A673 (cell line): ENCODE measurements at regions of chr4 and their contacts with region 1.

Region 1: DNA sequence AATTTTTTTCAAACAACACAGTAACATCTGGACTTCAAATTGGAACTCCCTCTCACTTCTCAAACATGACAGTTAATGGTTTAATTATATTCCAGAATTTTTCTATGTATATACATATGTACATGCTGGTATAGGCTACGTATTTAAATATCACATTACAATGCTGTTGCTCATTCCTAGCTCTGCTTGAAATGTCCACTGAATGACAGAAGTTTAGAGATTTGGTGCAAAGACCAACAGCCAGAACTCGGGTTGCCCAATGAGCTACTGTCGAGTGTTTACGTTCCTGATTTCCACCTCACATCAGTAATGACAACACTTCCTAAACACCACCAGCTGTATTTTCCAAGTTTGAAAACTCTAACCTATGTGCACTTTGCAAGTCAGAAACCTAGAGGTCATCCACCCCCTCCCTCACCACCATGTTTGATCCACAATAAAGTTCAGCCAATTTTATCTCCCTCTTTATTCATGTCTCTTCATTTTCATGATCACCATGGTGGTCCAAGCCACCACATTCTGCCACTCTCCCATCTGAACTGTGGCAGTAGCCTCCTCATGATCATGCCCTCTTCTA is 49.3 kb upstream of the RPL34 start:
- DNase-seq: no peak
- H3K4me3 ChIP-seq: no peak overlapping the region
- H3K27ac ChIP-seq: no peak overlapping the region
- H3K4me1 ChIP-seq: no peaks in the 10 kb centered on the region
- H3K27me3 ChIP-seq: no peaks in the 10 kb centered on the region
- CTCF ChIP-seq: no peak

Region 2: DNA sequence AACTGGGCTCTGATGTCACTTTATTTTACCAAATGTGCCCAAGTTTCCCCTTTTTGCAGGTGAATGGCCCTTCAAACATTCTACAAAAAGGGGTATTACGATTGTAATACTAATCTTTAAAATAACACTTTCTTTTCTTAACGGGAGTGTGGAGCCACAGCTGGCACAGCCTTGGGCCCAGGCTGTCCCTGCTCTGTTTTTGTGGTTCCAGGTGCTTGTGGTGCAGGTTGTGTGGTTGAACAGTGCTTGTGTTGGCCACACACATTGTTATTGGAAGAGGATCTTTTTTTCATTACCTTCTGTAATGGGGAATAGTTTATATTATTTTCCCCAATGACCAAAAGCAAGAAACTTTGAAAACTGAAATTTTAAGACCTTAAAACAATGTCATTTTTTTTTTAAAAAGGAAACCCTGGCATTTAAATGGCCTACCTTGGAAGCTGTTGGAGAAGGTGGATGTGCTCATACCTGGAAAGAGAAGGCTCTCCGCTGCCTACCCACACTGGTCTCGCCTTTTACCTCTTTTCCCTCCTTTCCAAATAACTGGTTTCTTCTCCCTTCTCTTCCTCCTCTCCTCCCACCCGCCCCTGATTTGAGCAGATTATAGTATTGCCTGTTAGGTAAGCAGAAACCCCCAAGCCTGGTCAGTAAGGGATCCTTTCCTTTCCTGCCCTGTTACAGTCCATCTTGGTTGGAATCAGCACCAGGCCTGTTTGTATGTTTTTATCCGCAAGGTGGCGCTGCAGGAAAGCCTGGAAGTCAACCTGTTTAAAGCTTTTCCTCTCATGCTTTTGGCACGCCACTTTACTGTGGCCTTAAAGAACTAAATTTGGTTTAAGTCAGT is 552.8 kb before region 1 on chr4:
- CTCF ChIA-PET with region 1: interaction called, 13 read pairs
- POLR2A ChIA-PET with region 1: interaction called, 3 read pairs
- intact Hi-C with region 1: loop called (anchors 2 kb)
- DNase-seq: peak; percentile 80
- H3K4me3 ChIP-seq: no peak overlapping the region
- H3K27ac ChIP-seq: no peak overlapping the region
- H3K4me1 ChIP-seq: no peaks in the 10 kb centered on the region
- H3K27me3 ChIP-seq: no peaks in the 10 kb centered on the region
- CTCF ChIP-seq: peak; percentile 93

Region 3: GRCh38 chr4:108030332-108030731 is 540.7 kb before region 1 on chr4:
- CTCF ChIA-PET with region 1: interaction called, 10 read pairs
- POLR2A ChIA-PET with region 1: no interaction called
- intact Hi-C with region 1: no loop called
- DNase-seq: peak; percentile 50
- H3K4me3 ChIP-seq: no peak overlapping the region
- H3K27ac ChIP-seq: no peak overlapping the region
- H3K4me1 ChIP-seq: no peaks in the 10 kb centered on the region
- H3K27me3 ChIP-seq: no peaks in the 10 kb centered on the region
- CTCF ChIP-seq: peak; percentile 60

Region 4: GRCh38 chr4:108060164-108060563 is 510.9 kb before region 1 on chr4:
- CTCF ChIA-PET with region 1: no interaction called
- POLR2A ChIA-PET with region 1: no interaction called
- intact Hi-C with region 1: loop called (anchors 10 kb)
- DNase-seq: peak; percentile 51
- H3K4me3 ChIP-seq: no peak overlapping the region
- H3K27ac ChIP-seq: no peak overlapping the region
- H3K4me1 ChIP-seq: no peaks in the 10 kb centered on the region
- H3K27me3 ChIP-seq: no peaks in the 10 kb centered on the region
- CTCF ChIP-seq: peak; percentile 47

Region 5: DNA sequence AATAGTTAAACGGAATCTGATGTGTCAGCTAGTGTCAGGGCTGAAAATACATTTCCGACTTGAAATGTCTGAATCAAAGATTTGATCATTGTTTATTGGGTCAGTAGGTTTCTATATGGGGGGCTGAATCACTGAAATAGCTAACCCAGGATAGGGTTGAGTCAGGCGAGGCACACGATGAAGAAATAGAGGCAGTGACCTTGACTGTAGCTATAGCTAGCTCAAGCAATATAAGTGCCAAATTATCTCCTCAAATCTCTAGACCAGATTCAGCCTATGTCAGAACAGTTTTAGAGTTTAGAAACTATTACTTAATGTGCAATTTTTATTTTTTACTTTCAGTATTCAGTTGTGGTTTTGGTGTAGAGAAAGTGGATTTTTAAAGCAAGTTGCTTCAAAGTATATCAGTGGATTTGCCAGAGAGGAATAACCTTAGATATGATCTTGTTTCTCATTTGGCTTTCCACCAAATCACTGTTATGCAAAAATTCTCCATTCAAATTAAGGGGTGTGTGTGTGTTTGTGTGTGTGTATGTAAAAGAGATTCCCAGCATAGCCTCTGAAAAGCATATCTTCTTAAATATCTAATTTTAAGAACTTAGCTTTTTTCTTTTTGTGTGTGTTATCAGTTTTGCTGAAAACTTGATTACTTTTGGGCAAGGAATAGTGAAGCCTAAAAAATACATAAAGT is 51.0 kb before region 1 on chr4:
- CTCF ChIA-PET with region 1: no interaction called
- POLR2A ChIA-PET with region 1: no interaction called
- intact Hi-C with region 1: loop called (anchors 5 kb)
- DNase-seq: no peak
- H3K4me3 ChIP-seq: no peak overlapping the region
- H3K27ac ChIP-seq: no peak overlapping the region
- H3K4me1 ChIP-seq: no peaks in the 10 kb centered on the region
- H3K27me3 ChIP-seq: peaks cover 12% of the 10 kb centered on the region
- CTCF ChIP-seq: no peak